ENCODE measurements at regions of chr11 and their contacts with region 1.

Region 1: GRCh38 chr11:65652511-65653231 is 10.0 kb downstream of the RELA start:
- DNase-seq: peak; percentile 91 to 97
- ATAC-seq: peak; percentile 65 to 84
- H3K4me3 ChIP-seq: peak overlapping the region; percentile 53
- H3K27ac ChIP-seq: peak overlapping the region; percentile 92
- H3K4me1 ChIP-seq: peaks cover 17% of the 10 kb centered on the region
- CTCF ChIP-seq: no peak
- EP300 ChIP-seq: no peak
- POLR2A ChIP-seq: peak; percentile 64
- RAD21 ChIP-seq: no peak

Region 2: DNA sequence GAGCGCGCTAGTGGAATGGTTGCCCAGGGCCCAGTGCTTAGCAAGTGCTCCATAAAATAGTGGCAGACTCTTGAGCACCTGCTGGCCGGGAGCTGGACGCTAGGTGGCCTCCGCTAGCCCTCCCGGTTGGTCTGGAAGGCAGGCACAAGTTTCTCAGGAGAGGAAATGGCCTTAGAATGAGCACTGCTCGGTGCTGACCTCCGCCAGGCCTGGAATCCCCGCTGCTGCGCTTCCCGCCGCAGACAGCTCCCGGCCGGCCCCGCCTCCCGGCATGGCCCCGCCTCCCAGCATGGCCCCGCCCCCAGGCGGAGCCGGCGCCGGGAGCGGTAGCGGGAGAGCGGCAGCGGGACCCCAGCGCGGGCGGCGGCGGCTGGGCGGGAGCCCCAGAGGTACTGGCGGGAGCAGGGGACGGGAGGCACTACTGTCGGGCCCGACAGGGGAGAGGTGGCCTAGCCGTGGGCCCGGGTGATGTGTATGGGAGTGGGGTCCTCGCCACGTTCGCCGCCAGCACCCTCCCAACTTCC is 14.8 kb before region 1 on chr11 and contains the start of gene SIPA1:
- CTCF ChIA-PET with region 1: interaction called, 3 read pairs
- POLR2A ChIA-PET with region 1: interaction called, 12 read pairs
- DNase-seq: peak; percentile 58 to 91
- ATAC-seq: peak; percentile 60 to 86
- H3K4me3 ChIP-seq: peak within 1 kb of the TSS; percentile 72
- H3K27ac ChIP-seq: peak within 1 kb of the TSS; percentile 73 to 89
- H3K4me1 ChIP-seq: peaks cover 19% of the 10 kb centered on the region
- CTCF ChIP-seq: no peak
- EP300 ChIP-seq: no peak
- POLR2A ChIP-seq: peak; percentile 42
- RAD21 ChIP-seq: no peak; a peak in 2 of 5 replicates
- polyA plus RNA-seq, gene SIPA1: 9.9 and 10.4 TPM in 2 replicates

Region 3: GRCh38 chr11:65662799-65663638 is 10.3 kb after region 1 on chr11 and contains the start of gene RELA:
- CTCF ChIA-PET with region 1: interaction called, 12 read pairs
- POLR2A ChIA-PET with region 1: interaction called, 27 read pairs
- DNase-seq: peak; percentile 67 to 91
- ATAC-seq: peak; percentile 89 to 91
- H3K4me3 ChIP-seq: peak within 1 kb of the TSS; percentile 100
- H3K27ac ChIP-seq: peak within 1 kb of the TSS; percentile 96 to 98
- H3K4me1 ChIP-seq: peaks cover 13% of the 10 kb centered on the region
- CTCF ChIP-seq: no peak
- EP300 ChIP-seq: no peak
- POLR2A ChIP-seq: peak; percentile 74
- RAD21 ChIP-seq: no peak
- polyA plus RNA-seq, gene RELA: 28.9 and 31.8 TPM in 2 replicates